Posterior vena cava (tissue), 2 donors: ENCODE measurements at regions of chr10 and their contacts with region 1.

Region 1: GRCh38 chr10:16408379-16408778 is 28.4 kb upstream of the PTER start:
- DNase-seq: no peak

Region 2: GRCh38 chr10:16063350-16063749 is 345.0 kb before region 1 on chr10:
- intact Hi-C with region 1: no loop called
- DNase-seq: no peak

Region 3: GRCh38 chr10:16381083-16381482 is 27.3 kb before region 1 on chr10:
- intact Hi-C with region 1: loop called in 1 of 2 experiments (anchors 1 kb)
- DNase-seq: no peak